ENCODE measurements at regions of chr2 and their contacts with region 1.

Region 1: DNA sequence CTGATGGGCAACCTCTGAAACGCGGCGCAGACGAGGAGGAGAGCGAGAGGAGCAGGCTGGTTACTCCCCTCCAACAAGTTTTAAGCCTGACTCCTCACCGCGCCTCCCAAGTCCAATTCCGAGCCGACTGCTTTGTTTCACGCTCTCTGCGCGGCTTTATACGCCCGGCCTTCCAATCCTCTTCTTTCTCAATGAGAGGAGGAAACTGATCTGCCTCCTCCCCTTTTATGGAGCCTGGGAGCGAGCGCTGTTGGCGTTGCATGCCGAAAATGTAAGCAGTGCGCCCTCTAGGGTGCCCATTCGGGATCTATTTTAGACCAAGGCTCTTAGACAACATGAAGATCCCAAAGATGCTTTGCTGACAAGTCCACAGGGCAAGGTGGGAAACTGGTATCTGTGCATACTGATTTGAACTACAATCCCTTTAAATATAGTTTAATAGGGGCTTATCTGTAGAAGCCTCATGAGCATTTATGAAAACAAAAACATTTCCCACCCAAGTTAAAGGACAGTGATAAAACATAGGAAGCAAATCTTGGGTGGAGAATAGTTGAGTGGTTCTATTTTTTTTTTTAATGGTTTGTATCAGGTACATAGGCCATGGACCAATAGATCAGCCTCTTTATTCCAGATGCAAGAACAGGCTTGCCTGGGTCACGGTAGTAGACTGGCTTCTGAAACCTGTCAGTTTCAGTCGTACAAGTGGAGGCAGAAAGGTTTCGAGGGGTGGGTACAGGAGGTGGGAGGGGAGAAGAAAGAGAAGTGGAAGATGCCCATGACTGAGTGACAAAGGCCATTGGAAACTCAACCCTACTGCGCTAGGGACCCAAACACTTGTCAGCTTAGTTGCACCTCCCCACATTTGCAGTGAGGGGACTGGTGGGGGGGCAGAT is at the start of gene RND3:
- DNase-seq: peak; percentile 94 to 97 (median 96)
- ATAC-seq: peak; percentile 78 to 83 (median 80)
- H3K4me3 ChIP-seq: peak within 1 kb of the TSS; percentile 59 to 88 (median 80)
- H3K27ac ChIP-seq: peak within 1 kb of the TSS; percentile 90 to 99 (median 96)
- H3K4me1 ChIP-seq: peaks cover 0 to 27% (median 17%) of the 10 kb centered on the region in 12 donors
- H3K27me3 ChIP-seq: peaks cover 0 to 17% (median 0%) of the 10 kb centered on the region in 9 donors
- CTCF ChIP-seq: peak; percentile 70 to 92 (median 85)
- POLR2A ChIP-seq: peak in 1 of 2 donors; percentile 95
- total RNA-seq, gene RND3: 16.8 to 40.1 (median 30.2) TPM

Region 2: GRCh38 chr2:149597668-149598326 is 890.0 kb before region 1 on chr2:
- intact Hi-C with region 1: loop called (anchors 2 to 5 kb)
- DNase-seq: peak in 2 of 5 donors; percentile 16 to 23
- ATAC-seq: peak; percentile 73 to 97 (median 92)
- H3K4me3 ChIP-seq: peak overlapping the region in 9 of 12 donors; percentile 20 to 53 (median 33)
- H3K27ac ChIP-seq: no peak overlapping the region
- H3K4me1 ChIP-seq: peaks cover 0 to 11% (median 0%) of the 10 kb centered on the region in 12 donors
- H3K27me3 ChIP-seq: no peaks in the 10 kb centered on the region
- CTCF ChIP-seq: peak; percentile 67 to 88 (median 78)
- POLR2A ChIP-seq: no peak

Region 3: GRCh38 chr2:149808556-149808955 is 679.2 kb before region 1 on chr2:
- intact Hi-C with region 1: loop called in 4 of 10 experiments (anchors 5 to 10 kb)
- DNase-seq: no peak
- ATAC-seq: no peak
- H3K4me3 ChIP-seq: no peak overlapping the region
- H3K27ac ChIP-seq: no peak overlapping the region
- H3K4me1 ChIP-seq: no peaks in the 10 kb centered on the region
- H3K27me3 ChIP-seq: no peaks in the 10 kb centered on the region
- CTCF ChIP-seq: no peak
- POLR2A ChIP-seq: no peak

Region 4: DNA sequence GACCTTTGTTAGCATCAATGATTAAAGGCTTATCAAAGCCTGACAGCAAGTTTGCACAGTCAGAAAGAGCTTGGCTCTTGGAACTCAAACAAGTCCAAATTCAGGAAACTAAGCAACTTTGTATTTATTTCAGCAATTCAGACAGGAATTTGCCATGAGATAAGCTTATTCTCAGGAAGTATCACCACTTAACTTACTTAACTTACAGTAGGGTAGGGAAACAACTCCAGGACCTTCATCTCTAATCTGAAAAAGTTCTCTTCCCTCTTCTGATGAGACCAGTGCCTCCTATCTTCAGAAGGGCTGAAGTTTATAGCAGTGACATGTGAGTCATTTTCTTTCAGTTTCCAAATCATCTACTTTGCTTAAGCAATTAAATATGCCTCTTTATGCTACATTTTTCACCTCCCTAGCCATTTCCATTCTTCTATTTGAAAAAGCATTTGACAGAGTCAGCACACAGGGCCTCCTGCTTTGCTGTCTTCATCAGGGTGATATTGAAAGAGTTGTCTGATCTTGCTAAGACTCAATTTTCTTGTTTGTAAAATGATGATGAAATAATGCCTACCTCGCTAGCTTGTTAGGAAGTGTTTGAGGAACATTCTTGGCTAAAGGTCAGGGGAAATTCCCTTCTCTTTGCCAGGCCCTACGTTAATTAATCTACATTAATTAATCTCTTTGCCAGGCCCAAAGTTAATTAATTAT is 389.7 kb before region 1 on chr2:
- intact Hi-C with region 1: no loop called
- DNase-seq: no peak
- ATAC-seq: peak in 2 of 4 donors; percentile 34 to 36
- H3K4me3 ChIP-seq: no peak overlapping the region
- H3K27ac ChIP-seq: peak overlapping the region in 1 of 12 donors; percentile 1
- H3K4me1 ChIP-seq: peaks cover 0 to 16% (median 2%) of the 10 kb centered on the region in 12 donors
- H3K27me3 ChIP-seq: no peaks in the 10 kb centered on the region
- CTCF ChIP-seq: peak in 5 of 12 donors; percentile 10 to 35 (median 17)
- POLR2A ChIP-seq: no peak

Region 5: GRCh38 chr2:150280231-150280630 is 207.6 kb before region 1 on chr2:
- intact Hi-C with region 1: loop called in 3 of 10 experiments (anchors 5 to 10 kb)
- DNase-seq: peak in 3 of 5 donors; percentile 27 to 53 (median 42)
- ATAC-seq: peak; percentile 74 to 86 (median 84)
- H3K4me3 ChIP-seq: no peak overlapping the region
- H3K27ac ChIP-seq: peak overlapping the region in 6 of 12 donors; percentile 17 to 74 (median 56)
- H3K4me1 ChIP-seq: peaks cover 0 to 26% (median 4%) of the 10 kb centered on the region in 12 donors
- H3K27me3 ChIP-seq: no peaks in the 10 kb centered on the region
- CTCF ChIP-seq: no peak
- POLR2A ChIP-seq: no peak

Region 6: DNA sequence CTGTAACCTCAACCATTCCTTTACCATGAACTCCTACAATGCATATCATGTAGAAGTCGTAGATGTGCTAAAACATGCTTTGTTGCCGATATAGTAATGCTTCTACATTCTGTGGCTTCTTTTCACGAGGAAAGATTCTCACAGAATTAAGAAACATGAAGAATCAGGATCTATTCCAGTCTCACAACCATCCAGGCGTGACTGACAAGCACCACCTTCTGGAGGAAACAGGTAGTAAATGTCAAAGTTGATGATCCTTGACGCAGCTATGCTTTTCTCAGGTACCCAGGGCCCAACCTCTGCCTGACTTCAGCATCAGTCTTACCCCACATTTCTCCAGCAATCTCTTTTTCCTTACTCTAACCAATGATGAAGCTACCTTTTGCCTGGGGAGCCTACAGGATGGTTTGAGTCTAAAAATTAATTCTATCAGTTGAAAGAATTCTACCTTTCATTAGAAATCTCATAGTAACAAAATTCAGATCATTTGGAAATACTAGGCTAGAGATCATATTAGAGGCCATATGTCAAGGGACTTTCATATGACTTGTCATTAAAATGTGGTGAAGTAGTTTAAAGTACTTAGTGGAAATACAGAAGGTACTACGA is 123.0 kb after region 1 on chr2:
- intact Hi-C with region 1: loop called in 4 of 10 experiments (anchors 2 to 5 kb)
- DNase-seq: no peak
- ATAC-seq: peak in 1 of 4 donors; percentile 41
- H3K4me3 ChIP-seq: no peak overlapping the region
- H3K27ac ChIP-seq: no peak overlapping the region
- H3K4me1 ChIP-seq: peaks cover 0 to 10% (median 0%) of the 10 kb centered on the region in 12 donors
- H3K27me3 ChIP-seq: no peaks in the 10 kb centered on the region
- CTCF ChIP-seq: peak in 11 of 12 donors; percentile 33 to 63 (median 45)
- POLR2A ChIP-seq: no peak

Region 7: GRCh38 chr2:151238527-151239487 is 751.0 kb after region 1 on chr2:
- intact Hi-C with region 1: loop called in 1 of 10 experiments (anchors 5 kb)
- DNase-seq: peak in 4 of 5 donors; percentile 23 to 51 (median 38)
- ATAC-seq: peak in 3 of 4 donors; percentile 70 to 90 (median 70)
- H3K4me3 ChIP-seq: no peak overlapping the region
- H3K27ac ChIP-seq: no peak overlapping the region
- H3K4me1 ChIP-seq: peaks cover 0 to 5% (median 0%) of the 10 kb centered on the region in 12 donors
- H3K27me3 ChIP-seq: no peaks in the 10 kb centered on the region
- CTCF ChIP-seq: peak; percentile 79 to 93 (median 87)
- POLR2A ChIP-seq: no peak

Region 8: GRCh38 chr2:152354909-152355308 is 1867.1 kb after region 1 on chr2:
- intact Hi-C with region 1: no loop called
- DNase-seq: no peak
- ATAC-seq: peak in 1 of 4 donors; percentile 59
- H3K4me3 ChIP-seq: no peak overlapping the region
- H3K27ac ChIP-seq: peak overlapping the region in 3 of 12 donors; percentile 3 to 39 (median 14)
- H3K4me1 ChIP-seq: peaks cover 0 to 18% (median 8%) of the 10 kb centered on the region in 12 donors
- H3K27me3 ChIP-seq: no peaks in the 10 kb centered on the region
- CTCF ChIP-seq: no peak
- POLR2A ChIP-seq: no peak